ENCODE measurements at regions of chr19 and their contacts with region 1.

Region 1: GRCh38 chr19:54159352-54160181 is at the start of gene LENG1:
- DNase-seq: peak; percentile 99 to 100 (median 99)
- H3K4me3 ChIP-seq: peak within 1 kb of the TSS; percentile 86
- H3K27ac ChIP-seq: peak within 1 kb of the TSS; percentile 55 to 93
- H3K4me1 ChIP-seq: peaks cover 9% of the 10 kb centered on the region
- H3K27me3 ChIP-seq: no peaks in the 10 kb centered on the region
- CTCF ChIP-seq: peak in 2 of 3 donors; percentile 67 to 69
- EP300 ChIP-seq: no peak
- POLR2A ChIP-seq: peak; percentile 83
- total RNA-seq, gene LENG1: 6.4 to 11.1 (median 8.5) TPM

Region 2: DNA sequence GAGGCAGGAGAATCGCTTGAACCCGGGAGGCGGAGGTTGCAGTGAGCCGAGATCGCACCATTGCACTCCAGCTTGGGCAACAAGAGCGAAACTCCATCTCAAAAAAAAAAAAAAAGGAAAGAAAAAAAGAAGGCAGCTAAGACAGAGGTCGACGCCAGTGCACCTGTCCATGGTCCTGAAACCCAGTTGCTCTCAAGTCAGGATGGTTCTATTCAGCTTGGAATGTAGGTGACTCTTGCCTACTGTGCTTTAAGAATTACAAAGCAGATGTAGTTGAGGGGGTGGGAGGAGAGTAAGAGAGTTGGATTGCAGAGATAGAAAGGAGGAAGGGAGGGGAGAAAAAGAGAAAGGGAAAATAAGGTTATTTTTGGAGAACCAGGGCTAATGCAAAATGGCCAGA is 231.8 kb before region 1 on chr19:
- intact Hi-C with region 1: no loop called
- DNase-seq: no peak
- H3K4me3 ChIP-seq: no peak overlapping the region
- H3K27ac ChIP-seq: no peak overlapping the region
- H3K4me1 ChIP-seq: no peaks in the 10 kb centered on the region
- H3K27me3 ChIP-seq: no peaks in the 10 kb centered on the region
- CTCF ChIP-seq: no peak
- EP300 ChIP-seq: no peak
- POLR2A ChIP-seq: no peak

Region 3: GRCh38 chr19:54203151-54203611 is 43.6 kb after region 1 on chr19:
- intact Hi-C with region 1: loop called in 1 of 4 experiments (anchors 5 kb)
- DNase-seq: no peak
- H3K4me3 ChIP-seq: no peak overlapping the region
- H3K27ac ChIP-seq: no peak overlapping the region
- H3K4me1 ChIP-seq: peaks cover 29% of the 10 kb centered on the region
- H3K27me3 ChIP-seq: no peaks in the 10 kb centered on the region
- CTCF ChIP-seq: no peak
- EP300 ChIP-seq: no peak
- POLR2A ChIP-seq: no peak

Measured in ovary (tissue), 10 donors.